Activated CD8-positive, alpha-beta memory T cell treated with anti-CD3 and anti-CD28 coated beads, Interleukin-2, amount 10 ng/mL, durations not matched to agents 7 days and 5 days (primary cell): ENCODE measurements at regions of chr1 and their contacts with region 1.

Region 1: DNA sequence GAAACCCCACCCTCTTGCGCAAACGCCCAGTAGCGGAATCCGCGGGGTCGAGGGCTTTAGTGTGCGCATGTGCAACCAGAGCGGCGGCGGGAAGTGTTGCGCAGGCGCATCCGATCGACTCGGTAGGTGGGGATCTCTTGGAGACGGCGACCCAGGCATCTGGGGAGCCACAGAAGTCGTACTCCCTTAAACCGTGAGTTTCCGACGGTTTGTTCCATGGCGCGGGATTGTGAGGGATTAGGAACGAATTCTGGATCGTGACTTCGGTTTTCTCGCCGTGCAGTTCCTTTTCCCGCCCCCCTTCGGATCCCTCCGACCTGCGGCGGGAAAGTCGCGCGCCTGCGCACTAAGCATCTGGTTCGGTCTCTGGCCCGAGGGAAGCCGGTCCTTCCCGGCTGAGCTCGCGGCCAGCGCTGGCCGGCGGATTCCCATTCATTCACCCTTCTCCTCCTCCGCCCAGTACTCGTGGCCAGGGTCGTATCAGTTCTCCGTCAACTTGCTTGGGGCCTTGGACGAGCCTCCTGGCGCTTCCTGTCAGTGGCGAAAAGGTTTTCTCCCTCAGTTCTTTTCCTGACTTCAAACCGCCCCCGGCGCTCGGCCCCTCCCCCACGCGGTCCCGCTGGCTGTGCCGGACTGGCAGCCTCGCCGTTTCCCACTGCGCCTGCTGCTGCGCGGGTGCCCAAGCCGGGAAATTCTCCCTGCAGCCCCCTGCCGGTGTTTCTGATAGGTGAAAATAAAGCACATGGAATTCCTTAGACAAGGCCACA is at the start of gene CDC7:
- DNase-seq: peak; percentile 93
- ATAC-seq: peak; percentile 92
- H3K4me3 Mint-ChIP-seq: no peak within 1 kb of the TSS
- H3K27ac Mint-ChIP-seq: no peak within 1 kb of the TSS
- H3K4me1 Mint-ChIP-seq: peaks cover 26% of the 10 kb centered on the region
- H3K27me3 Mint-ChIP-seq: no peaks in the 10 kb centered on the region
- total RNA-seq, gene CDC7: 39.5 to 39.7 TPM

Region 2: DNA sequence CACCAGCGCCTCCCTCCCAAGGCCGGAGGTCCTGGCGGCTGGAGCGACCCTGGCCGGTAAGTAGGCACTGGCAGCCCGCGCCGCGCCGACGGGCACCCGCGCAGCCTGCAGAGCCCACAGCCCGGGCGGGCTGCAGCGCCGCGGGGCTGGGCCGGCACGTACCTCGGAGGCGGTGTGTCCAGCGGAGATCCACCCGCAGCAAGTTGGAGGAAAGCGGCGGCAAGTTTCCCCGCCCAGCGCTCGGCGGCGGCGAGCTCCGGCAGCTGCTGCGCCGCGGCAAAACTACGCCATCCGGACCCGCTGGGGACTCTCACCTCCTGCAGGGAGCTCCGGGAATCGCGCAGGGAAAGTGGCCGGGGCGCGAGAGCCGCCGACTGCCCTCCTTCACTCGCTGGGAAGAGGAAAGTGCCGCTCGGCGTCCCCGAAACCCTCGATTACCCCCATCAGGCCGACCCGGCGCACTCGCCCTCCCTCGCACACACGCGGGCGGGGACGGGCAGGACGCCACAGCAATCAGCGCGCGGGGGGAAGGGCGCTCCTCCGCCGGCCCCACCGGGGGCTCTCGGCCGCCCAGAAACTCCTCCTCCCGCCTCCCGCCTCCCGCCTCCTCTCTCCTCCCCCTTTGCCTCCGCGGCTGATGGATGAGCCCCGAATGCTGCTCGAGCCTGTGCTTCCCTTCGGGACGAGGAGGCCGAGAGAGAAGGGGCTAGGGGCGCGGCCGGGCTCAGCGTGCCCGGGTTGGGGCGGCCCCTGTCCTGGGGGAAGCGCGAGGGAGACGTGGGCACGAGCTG is 385.0 kb after region 1 on chr1 and contains the start of gene TGFBR3:
- CTCF ChIA-PET with region 1: interaction called, 10 read pairs
- DNase-seq: peak; percentile 73
- ATAC-seq: peak; percentile 86
- H3K4me3 Mint-ChIP-seq: peak within 1 kb of the TSS; percentile 87
- H3K27ac Mint-ChIP-seq: peak within 1 kb of the TSS; percentile 62
- H3K4me1 Mint-ChIP-seq: peaks cover 33% of the 10 kb centered on the region
- H3K27me3 Mint-ChIP-seq: peaks cover 30% of the 10 kb centered on the region
- total RNA-seq, gene TGFBR3: 10.4 to 25.8 TPM

Region 3: GRCh38 chr1:91924146-91924545 is 423.2 kb after region 1 on chr1:
- CTCF ChIA-PET with region 1: interaction called, 10 read pairs
- DNase-seq: no peak
- ATAC-seq: no peak
- H3K4me3 Mint-ChIP-seq: no peak overlapping the region
- H3K27ac Mint-ChIP-seq: no peak overlapping the region
- H3K4me1 Mint-ChIP-seq: peaks cover 10% of the 10 kb centered on the region
- H3K27me3 Mint-ChIP-seq: peaks cover 3% of the 10 kb centered on the region